ENCODE measurements at regions of chr5 and their contacts with region 1.

Region 1: DNA sequence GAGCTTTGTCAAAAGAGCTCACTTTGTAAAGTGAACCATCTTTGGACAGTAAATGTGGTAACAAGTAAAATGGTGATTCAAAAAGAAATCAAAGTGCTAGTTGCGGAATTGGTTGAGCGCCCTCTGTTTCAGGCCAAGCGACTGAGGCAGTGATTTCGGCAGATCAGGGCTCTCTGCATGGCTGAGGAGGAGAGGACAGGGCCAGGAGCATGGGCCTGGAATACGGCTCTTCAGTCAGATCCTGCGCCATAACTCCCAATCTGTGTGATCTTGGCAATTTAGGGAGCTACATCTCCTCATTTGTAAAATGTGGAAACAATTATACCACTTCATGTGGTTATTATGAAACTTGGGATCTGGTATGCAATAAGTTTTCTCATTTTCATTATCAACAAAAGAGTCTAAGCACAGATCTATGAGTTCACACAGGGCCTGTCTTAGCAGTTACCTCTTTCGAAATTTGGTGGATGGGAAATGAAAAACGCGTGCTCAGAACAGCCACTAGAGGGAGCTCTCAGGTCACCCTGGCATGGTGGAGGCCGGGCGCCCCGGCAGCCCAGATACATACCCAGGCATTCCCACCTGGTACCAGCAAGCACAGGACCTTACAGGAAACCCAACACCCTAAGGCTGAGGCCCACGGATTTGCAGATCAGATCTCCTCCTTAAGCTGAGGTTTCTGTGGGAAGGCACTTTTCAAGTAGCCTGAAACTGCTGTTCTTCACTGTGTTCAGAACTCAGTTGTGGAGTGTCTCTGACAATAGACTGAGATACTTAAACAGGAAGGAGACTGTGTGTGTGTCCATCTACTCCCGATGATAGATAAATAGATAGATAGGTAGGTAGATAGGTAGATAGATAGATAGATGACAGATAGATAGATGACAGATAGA is 303.7 kb downstream of the RAB3C start:
- DNase-seq: peak; percentile 62 to 83
- H3K4me3 ChIP-seq: no peak overlapping the region
- H3K27ac ChIP-seq: peak overlapping the region; percentile 56 to 80
- H3K4me1 ChIP-seq: peaks cover 0 to 57% (median 16%) of the 10 kb centered on the region in 4 donors
- H3K27me3 ChIP-seq: no peaks in the 10 kb centered on the region
- CTCF ChIP-seq: peak; percentile 80 to 88

Region 2: GRCh38 chr5:59178071-59178470 is 291.5 kb after region 1 on chr5:
- intact Hi-C with region 1: loop called (anchors 5 kb)
- DNase-seq: no peak
- H3K4me3 ChIP-seq: no peak overlapping the region
- H3K27ac ChIP-seq: no peak overlapping the region
- H3K4me1 ChIP-seq: peaks cover 0 to 6% (median 0%) of the 10 kb centered on the region in 4 donors
- H3K27me3 ChIP-seq: no peaks in the 10 kb centered on the region
- CTCF ChIP-seq: no peak

Region 3: GRCh38 chr5:59367791-59368394 is 481.3 kb after region 1 on chr5:
- intact Hi-C with region 1: loop called (anchors 10 kb)
- DNase-seq: peak; percentile 46 to 68
- H3K4me3 ChIP-seq: no peak overlapping the region
- H3K27ac ChIP-seq: no peak overlapping the region
- H3K4me1 ChIP-seq: peaks cover 0 to 6% (median 0%) of the 10 kb centered on the region in 4 donors
- H3K27me3 ChIP-seq: no peaks in the 10 kb centered on the region
- CTCF ChIP-seq: peak; percentile 60 to 74